ENCODE measurements at regions of chr5 and their contacts with region 1.

Region 1: DNA sequence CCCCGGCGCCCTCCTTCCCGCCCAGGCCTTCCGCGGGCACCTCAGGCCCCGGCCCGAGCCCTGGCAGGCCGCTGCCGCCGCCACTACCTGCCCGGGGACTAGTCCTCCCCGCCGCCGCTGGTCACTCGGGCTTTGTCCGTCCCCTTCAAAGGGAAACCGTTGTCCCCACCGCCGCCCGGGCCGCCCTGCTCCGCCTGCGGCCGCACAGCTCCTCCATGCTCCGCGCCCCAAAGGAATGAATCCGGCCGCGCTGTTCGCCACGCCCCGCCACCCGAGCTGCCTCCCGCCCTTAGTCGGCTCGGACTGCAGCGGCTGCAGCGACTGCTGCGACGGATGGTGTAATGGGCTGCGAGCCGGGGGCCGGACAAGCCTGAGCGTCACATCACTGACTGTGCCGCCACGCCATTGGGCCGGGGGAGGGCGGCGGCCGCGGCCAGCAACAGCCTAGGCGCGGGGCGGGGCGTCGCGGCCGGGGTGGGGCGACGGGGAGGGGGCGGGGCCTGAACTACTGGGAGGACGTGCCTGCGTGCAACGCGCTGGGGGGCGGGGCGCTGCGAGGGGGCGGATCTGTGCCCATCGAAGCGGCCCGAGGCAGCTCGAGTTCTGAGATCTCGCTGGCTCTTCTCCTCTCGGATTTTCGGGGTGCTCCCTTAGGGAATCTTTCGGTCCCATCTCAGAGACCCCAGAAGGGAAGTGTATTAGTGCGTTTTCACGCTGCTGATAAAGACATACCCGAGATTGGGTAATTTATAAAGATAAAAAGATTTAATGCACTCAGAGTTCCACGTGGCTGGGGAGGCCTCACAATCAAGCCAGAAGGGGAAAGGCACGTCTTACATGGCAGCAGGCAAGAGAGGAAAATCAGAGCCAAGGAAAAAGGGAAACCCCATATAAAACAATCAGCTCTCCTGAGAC is at the start of gene FEM1C:
- DNase-seq: peak; percentile 96
- H3K4me3 Mint-ChIP-seq: peak within 1 kb of the TSS; percentile 94
- H3K27ac Mint-ChIP-seq: peak within 1 kb of the TSS; percentile 99
- H3K4me1 Mint-ChIP-seq: peaks cover 47% of the 10 kb centered on the region
- H3K27me3 Mint-ChIP-seq: no peaks in the 10 kb centered on the region
- total RNA-seq, gene FEM1C: 16.8 to 17.0 TPM

Region 2: GRCh38 chr5:115296124-115297022 is 248.3 kb before region 1 on chr5 and contains the start of gene CCDC112:
- CTCF ChIA-PET with region 1: no interaction called
- POLR2A ChIA-PET with region 1: interaction called, 19 read pairs
- DNase-seq: peak; percentile 78
- H3K4me3 Mint-ChIP-seq: peak within 1 kb of the TSS; percentile 76
- H3K27ac Mint-ChIP-seq: no peak within 1 kb of the TSS
- H3K4me1 Mint-ChIP-seq: peaks cover 12% of the 10 kb centered on the region
- H3K27me3 Mint-ChIP-seq: peaks cover 51% of the 10 kb centered on the region
- total RNA-seq, gene CCDC112: 2.0 TPM

Region 3: DNA sequence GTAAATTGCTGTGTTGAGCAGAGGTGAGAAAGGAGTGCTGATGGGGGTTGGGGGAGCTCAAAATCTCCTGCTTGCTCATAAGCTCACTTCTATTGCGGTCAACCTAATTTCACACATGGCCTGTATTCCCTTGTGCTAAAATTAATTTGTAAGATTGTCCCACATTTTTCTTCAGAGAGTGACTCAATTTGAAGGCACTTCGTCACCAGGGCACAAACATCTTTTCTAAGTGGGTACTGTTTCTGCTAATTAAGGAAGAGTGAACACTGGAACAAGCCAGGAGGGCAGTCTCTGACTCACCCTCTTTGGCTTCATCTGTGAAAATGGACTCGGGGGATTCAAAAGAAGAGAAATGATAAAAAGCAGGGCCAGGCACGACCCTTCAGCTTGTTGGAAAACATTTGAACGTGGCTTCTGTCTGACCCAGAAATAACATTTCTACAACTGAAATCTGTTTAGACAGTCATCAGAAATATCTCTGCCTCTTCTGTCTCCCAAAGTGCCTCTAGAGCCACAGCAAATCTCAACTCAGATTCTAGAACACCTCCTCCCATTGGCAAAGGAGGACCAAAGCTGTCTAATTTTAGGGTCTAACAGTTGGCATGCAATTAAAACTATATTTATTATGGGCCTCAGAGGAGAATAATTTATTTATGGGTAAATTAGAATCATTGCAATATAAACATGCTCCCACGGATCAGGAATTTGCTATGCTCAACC is 50.0 kb before region 1 on chr5:
- CTCF ChIA-PET with region 1: no interaction called
- POLR2A ChIA-PET with region 1: no interaction called
- DNase-seq: no peak
- H3K4me3 Mint-ChIP-seq: no peak overlapping the region
- H3K27ac Mint-ChIP-seq: no peak overlapping the region
- H3K4me1 Mint-ChIP-seq: no peaks in the 10 kb centered on the region
- H3K27me3 Mint-ChIP-seq: peaks cover 37% of the 10 kb centered on the region

Region 4: GRCh38 chr5:115575167-115576070 is 30.7 kb after region 1 on chr5:
- CTCF ChIA-PET with region 1: interaction called, 25 read pairs
- POLR2A ChIA-PET with region 1: interaction called, 9 read pairs
- DNase-seq: no peak
- H3K4me3 Mint-ChIP-seq: no peak overlapping the region
- H3K27ac Mint-ChIP-seq: no peak overlapping the region
- H3K4me1 Mint-ChIP-seq: peaks cover 2% of the 10 kb centered on the region
- H3K27me3 Mint-ChIP-seq: peaks cover 11% of the 10 kb centered on the region

Region 5: DNA sequence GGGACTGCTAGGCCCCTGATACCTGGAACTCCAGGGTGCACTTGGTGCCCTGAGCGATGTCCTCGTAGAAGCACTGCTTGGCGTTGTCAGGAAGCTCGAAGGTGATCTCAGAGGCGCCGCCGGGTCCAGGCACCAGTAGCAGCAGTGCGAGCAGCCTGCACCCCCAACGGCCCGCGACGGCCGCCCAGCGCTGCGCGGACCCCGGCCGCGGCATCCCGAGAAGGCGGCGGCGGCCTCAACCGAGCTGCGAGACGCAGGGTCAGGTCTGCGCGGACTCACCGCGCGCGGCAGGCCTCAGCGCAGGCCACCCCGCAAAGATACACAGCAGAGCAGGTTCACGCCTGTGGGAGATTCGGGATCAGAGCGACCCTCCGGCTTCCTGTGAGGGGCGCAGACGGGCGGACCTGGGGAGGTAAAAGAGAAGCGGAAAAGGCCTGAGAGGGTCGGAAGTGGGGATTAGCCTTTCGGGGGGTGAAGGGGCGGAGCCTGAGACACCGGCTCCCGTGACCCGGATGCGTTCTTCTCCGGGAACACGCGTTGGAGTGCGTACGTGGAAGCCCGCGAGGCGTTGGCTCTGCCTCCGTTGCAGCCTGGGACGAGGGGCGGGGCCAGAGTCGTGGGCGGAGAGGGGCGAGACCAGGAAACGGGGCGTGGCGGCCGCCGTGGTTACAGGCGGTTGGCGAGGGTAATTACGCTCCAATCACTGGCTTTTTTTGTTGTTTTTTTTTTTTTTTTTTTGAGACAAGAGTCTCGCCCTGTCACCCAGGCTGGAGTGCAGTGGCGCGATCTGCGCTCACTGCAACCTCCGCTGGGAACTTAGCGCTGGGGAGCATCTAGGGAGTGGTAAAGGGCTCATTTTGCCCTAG is 81.1 kb after region 1 on chr5 and contains the start of gene TMED7:
- CTCF ChIA-PET with region 1: interaction called, 6 read pairs
- POLR2A ChIA-PET with region 1: interaction called, 33 read pairs
- DNase-seq: peak; percentile 99
- H3K4me3 Mint-ChIP-seq: no peak within 1 kb of the TSS
- H3K27ac Mint-ChIP-seq: no peak within 1 kb of the TSS
- H3K4me1 Mint-ChIP-seq: peaks cover 30% of the 10 kb centered on the region
- H3K27me3 Mint-ChIP-seq: peaks cover 3% of the 10 kb centered on the region
- total RNA-seq, gene TMED7: 52.7 to 55.6 TPM

Region 6: DNA sequence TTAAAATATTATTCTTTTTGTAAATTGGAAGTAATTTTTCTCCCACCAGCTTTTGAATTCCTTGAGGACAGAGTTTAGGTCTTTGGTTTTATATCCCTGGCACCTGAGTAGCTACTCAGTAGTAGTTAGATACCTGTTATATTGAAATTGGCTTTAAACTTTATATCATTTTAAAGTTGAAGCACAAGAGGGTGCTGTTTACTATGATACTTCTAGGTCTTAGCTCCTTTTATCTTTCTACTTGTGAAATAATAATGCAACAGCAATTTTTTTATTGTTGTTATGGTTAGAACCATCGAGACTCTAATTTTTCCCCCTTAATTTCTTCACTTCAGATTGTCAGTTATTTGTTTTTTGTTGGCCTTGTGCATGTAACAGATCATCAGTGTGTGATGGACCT is 343.3 kb after region 1 on chr5:
- CTCF ChIA-PET with region 1: no interaction called
- POLR2A ChIA-PET with region 1: no interaction called
- DNase-seq: no peak
- H3K4me3 Mint-ChIP-seq: no peak overlapping the region
- H3K27ac Mint-ChIP-seq: no peak overlapping the region
- H3K4me1 Mint-ChIP-seq: no peaks in the 10 kb centered on the region
- H3K27me3 Mint-ChIP-seq: no peaks in the 10 kb centered on the region

Region 7: DNA sequence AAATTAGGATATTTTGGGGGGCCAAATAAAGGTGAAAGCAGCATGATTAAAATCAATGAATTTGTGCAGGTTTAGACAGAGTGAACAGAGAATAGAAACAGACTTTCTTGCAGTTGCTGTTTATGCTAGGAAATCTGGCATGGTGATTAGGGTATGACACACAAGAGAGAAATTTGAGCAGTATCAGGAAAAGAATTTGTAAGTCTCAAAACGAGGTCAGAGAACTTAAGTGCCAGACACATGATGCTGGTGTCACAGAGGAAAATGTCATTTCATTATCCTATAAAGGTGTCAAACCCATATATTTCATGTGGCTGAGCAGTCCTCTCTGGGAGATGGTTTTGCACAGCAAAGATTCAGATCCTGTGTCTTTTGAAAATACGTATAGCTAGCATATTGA is 433.3 kb after region 1 on chr5:
- CTCF ChIA-PET with region 1: no interaction called
- POLR2A ChIA-PET with region 1: no interaction called
- DNase-seq: no peak
- H3K4me3 Mint-ChIP-seq: no peak overlapping the region
- H3K27ac Mint-ChIP-seq: no peak overlapping the region
- H3K4me1 Mint-ChIP-seq: peaks cover 9% of the 10 kb centered on the region
- H3K27me3 Mint-ChIP-seq: peaks cover 23% of the 10 kb centered on the region

Measured in activated CD4-positive, alpha-beta memory T cell treated with anti-CD3 and anti-CD28 coated beads, Interleukin-2, amount 10 ng/mL, durations not matched to agents 7 days and 5 days (primary cell).